GM18951 (cell line): ENCODE measurements at regions of chr1 and their contacts with region 1.

Region 1: DNA sequence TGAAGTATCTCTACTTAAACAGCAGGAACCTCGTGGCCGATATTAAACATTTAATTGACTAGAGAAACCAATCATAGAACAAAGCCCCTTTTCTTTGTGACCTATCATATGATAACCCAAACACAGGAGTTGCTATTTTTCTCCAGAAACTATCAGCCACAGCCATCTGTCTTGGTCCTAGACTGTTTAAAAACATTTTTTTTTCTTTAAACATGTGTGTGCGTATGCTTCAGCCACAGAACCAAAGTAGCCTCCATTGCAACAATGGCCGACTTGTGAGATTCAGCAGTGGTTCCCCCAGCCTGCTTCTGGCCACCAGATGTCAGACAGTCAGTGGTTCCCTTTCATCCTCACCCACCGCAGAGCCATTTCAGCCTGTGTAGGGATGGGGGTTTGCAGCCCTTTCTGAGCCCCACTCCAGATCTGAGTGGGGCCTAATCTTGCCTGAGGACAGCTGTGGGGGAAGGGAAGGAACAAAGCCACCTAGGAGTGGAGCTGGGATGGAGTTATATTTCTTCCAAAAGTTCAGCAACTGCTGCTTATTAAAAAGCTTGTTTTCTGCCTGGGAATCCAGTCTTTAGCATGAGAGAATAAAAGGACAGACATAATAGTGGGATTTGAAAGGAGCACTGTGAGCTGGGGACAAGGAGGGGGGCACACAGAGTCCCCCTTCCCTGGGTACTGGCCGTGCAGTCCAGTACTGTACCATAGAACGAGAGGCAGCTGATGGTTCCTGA is 11.7 kb upstream of the IGSF3 start:
- POLR2A ChIP-seq: no peak

Region 2: DNA sequence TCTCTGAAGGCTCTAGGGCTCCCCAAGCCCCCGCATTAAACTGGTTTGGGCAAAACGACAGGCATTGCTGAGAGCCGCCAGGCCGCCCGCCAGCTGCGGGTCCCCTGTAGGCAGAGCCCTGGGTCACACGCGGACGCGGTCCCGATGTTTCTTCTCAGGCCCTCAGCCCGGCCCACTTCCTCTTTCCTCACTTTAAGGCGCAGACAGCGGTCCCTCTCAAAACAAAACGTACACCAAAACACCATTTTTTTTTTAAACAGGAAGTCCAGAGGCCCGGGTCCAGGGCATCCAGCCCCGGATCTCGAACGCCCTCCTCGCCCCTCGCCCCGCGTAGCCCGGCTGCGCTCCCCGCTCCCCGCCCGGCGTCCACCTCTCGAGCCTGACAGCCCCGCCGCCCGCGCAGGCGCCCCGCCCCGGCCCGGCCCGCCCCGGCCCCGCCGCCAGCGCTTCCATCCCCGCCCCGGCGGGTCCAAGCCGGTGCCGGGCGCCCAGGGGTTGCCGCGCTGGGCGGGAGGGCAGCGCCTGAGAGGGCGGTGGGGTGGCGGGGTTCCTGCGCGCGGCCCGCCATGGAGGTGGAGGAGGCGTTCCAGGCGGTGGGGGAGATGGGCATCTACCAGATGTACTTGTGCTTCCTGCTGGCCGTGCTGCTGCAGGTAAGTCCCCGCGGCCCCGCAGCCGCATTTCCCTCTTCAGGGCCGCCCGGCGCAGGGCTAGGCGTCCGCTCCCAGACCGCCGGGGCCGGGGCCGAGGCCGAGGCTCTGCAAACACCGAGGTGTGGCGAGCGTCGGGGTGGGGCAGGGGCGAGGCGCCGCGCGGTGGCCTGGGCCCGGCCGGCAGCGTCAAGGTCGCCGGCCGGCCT is 703.0 kb before region 1 on chr1 and contains the start of gene SLC22A15:
- in situ Hi-C with region 1: no loop called
- POLR2A ChIP-seq: peak; percentile 39

Region 3: DNA sequence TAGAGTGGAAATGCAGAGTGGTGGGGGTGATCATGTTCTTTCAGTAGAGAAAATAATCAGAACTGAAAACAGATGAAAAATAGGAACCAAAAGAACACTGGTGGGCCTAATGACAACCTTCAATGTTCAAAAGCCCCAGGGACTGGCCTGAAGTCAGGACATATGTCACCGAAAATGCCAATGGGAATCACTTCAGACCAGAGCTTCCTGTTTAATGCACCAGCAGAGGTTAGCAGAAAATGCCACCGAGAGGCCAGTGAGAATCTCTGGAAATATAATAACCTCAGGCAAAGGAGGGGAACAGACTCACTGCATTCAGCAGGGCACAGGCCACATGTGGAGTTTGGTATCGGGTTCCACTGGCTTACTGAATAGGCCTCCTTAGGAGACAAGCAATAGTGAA is 92.5 kb before region 1 on chr1:
- in situ Hi-C with region 1: loop called (anchors 10 kb)
- POLR2A ChIP-seq: no peak

Region 4: DNA sequence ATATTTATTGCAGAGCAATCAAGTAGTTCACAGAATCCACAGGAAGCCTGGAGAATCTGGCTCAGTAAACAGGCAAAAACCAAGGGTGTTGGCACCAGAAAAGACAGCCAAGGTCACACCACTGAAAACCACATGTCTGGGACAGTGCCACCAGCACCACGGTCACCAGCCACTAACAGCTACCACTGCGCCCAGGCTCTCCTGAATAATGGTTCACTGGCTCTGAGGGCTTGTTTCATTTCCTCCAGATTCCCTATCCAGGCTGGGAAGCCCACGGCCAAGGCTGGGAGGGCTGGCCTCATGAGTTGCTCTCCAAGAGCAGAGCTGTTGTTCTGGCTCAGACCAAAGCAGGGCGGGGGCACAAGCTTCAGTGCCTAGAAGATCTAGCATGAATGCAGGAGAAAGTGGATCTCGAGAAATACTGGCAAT is 175.9 kb after region 1 on chr1:
- in situ Hi-C with region 1: no loop called
- POLR2A ChIP-seq: no peak